ENCODE measurements at regions of chr9 and their contacts with region 1.

Region 1: GRCh38 chr9:5437254-5438216 is at the start of gene PLGRKT:
- DNase-seq: peak; percentile 76 to 96 (median 90)
- ATAC-seq: peak; percentile 96
- H3K4me3 ChIP-seq: peak within 1 kb of the TSS; percentile 71 to 76
- H3K4me3 Mint-ChIP-seq: peak within 1 kb of the TSS; percentile 89
- H3K27ac ChIP-seq: peak within 1 kb of the TSS; percentile 89 to 90
- H3K27ac Mint-ChIP-seq: peak within 1 kb of the TSS; percentile 96
- H3K4me1 ChIP-seq: peaks cover 23% of the 10 kb centered on the region
- H3K4me1 Mint-ChIP-seq: peaks cover 36% of the 10 kb centered on the region
- H3K27me3 ChIP-seq: no peaks in the 10 kb centered on the region
- H3K27me3 Mint-ChIP-seq: no peaks in the 10 kb centered on the region
- CTCF ChIP-seq: peak; percentile 10
- total RNA-seq, gene PLGRKT: 10.1 to 12.8 TPM

Region 2: GRCh38 chr9:3525836-3526164 is 1911.7 kb before region 1 on chr9 and contains the start of gene RFX3:
- CTCF ChIA-PET with region 1: no interaction called
- POLR2A ChIA-PET with region 1: no interaction called
- intact Hi-C with region 1: loop called (anchors 2 to 10 kb)
- DNase-seq: peak; percentile 86 to 98 (median 93)
- ATAC-seq: peak; percentile 66
- H3K4me3 ChIP-seq: peak within 1 kb of the TSS; percentile 74 to 98
- H3K4me3 Mint-ChIP-seq: peak within 1 kb of the TSS; percentile 98
- H3K27ac ChIP-seq: peak within 1 kb of the TSS; percentile 99 to 100
- H3K27ac Mint-ChIP-seq: peak within 1 kb of the TSS; percentile 100
- H3K4me1 ChIP-seq: peaks cover 48% of the 10 kb centered on the region
- H3K4me1 Mint-ChIP-seq: peaks cover 65% of the 10 kb centered on the region
- H3K27me3 ChIP-seq: no peaks in the 10 kb centered on the region
- H3K27me3 Mint-ChIP-seq: no peaks in the 10 kb centered on the region
- CTCF ChIP-seq: no peak
- total RNA-seq, gene RFX3: 17.6 to 18.9 TPM

Region 3: GRCh38 chr9:4792572-4793458 is 644.7 kb before region 1 on chr9 and contains the start of gene RCL1:
- CTCF ChIA-PET with region 1: no interaction called
- POLR2A ChIA-PET with region 1: interaction called, 4 read pairs
- intact Hi-C with region 1: loop called (anchors 1 to 5 kb)
- DNase-seq: peak; percentile 92 to 98 (median 95)
- ATAC-seq: peak; percentile 90
- H3K4me3 ChIP-seq: peak within 1 kb of the TSS; percentile 92 to 98
- H3K4me3 Mint-ChIP-seq: peak within 1 kb of the TSS; percentile 95
- H3K27ac ChIP-seq: peak within 1 kb of the TSS; percentile 90 to 92
- H3K27ac Mint-ChIP-seq: peak within 1 kb of the TSS; percentile 96
- H3K4me1 ChIP-seq: peaks cover 30% of the 10 kb centered on the region
- H3K4me1 Mint-ChIP-seq: peaks cover 47% of the 10 kb centered on the region
- H3K27me3 ChIP-seq: no peaks in the 10 kb centered on the region
- H3K27me3 Mint-ChIP-seq: no peaks in the 10 kb centered on the region
- CTCF ChIP-seq: no peak
- total RNA-seq, gene RCL1: 30.8 to 35.0 TPM

Region 4: DNA sequence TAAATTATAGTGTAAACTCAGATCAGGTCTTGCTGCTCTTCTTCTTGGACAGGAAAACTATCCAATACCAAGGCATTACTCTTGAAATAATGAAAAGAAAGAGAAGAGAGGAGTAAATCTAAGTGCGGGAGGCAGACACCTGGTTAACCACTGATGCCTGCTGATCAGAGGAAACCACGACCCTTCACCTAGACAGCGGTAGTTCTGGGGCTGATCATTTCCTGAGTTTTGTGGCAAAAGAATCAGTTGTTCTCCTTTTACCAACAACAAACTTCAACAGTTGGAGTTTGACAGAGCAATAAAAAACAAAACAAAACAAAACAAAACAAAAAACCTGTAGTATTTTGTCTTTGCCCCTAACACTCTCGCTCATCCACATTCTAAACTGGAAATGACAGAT is 100.8 kb before region 1 on chr9:
- CTCF ChIA-PET with region 1: no interaction called
- POLR2A ChIA-PET with region 1: no interaction called
- intact Hi-C with region 1: loop called (anchors 5 kb)
- DNase-seq: peak in 5 of 9 experiments; percentile 23 to 69 (median 47)
- ATAC-seq: peak; percentile 19
- H3K4me3 ChIP-seq: peak overlapping the region; percentile 2 to 31
- H3K4me3 Mint-ChIP-seq: peak overlapping the region; percentile 71
- H3K27ac ChIP-seq: peak overlapping the region; percentile 28 to 30
- H3K27ac Mint-ChIP-seq: peak overlapping the region; percentile 89
- H3K4me1 ChIP-seq: peaks cover 27% of the 10 kb centered on the region
- H3K4me1 Mint-ChIP-seq: peaks cover 54% of the 10 kb centered on the region
- H3K27me3 ChIP-seq: no peaks in the 10 kb centered on the region
- H3K27me3 Mint-ChIP-seq: no peaks in the 10 kb centered on the region
- CTCF ChIP-seq: no peak

Region 5: GRCh38 chr9:5582835-5583195 is 145.3 kb after region 1 on chr9:
- CTCF ChIA-PET with region 1: interaction called, 28 read pairs
- POLR2A ChIA-PET with region 1: interaction called, 10 read pairs
- intact Hi-C with region 1: no loop called
- DNase-seq: peak in 6 of 9 experiments; percentile 4 to 62 (median 40)
- ATAC-seq: peak; percentile 85
- H3K4me3 ChIP-seq: no peak overlapping the region
- H3K4me3 Mint-ChIP-seq: no peak overlapping the region
- H3K27ac ChIP-seq: no peak overlapping the region
- H3K27ac Mint-ChIP-seq: peak overlapping the region; percentile 46
- H3K4me1 ChIP-seq: peaks cover 31% of the 10 kb centered on the region
- H3K4me1 Mint-ChIP-seq: peaks cover 45% of the 10 kb centered on the region
- H3K27me3 ChIP-seq: no peaks in the 10 kb centered on the region
- H3K27me3 Mint-ChIP-seq: no peaks in the 10 kb centered on the region
- CTCF ChIP-seq: no peak

Region 6: GRCh38 chr9:5843794-5844504 is 406.4 kb after region 1 on chr9:
- CTCF ChIA-PET with region 1: interaction called, 3 read pairs
- POLR2A ChIA-PET with region 1: no interaction called
- intact Hi-C with region 1: loop called in 1 of 2 experiments (anchors 5 kb)
- DNase-seq: peak in 1 of 9 experiments; percentile 35
- ATAC-seq: no peak
- H3K4me3 ChIP-seq: peak overlapping the region in 1 of 2 experiments; percentile 24
- H3K4me3 Mint-ChIP-seq: peak overlapping the region; percentile 65
- H3K27ac ChIP-seq: peak overlapping the region in 1 of 2 experiments; percentile 61
- H3K27ac Mint-ChIP-seq: peak overlapping the region; percentile 84
- H3K4me1 ChIP-seq: peaks cover 53% of the 10 kb centered on the region
- H3K4me1 Mint-ChIP-seq: peaks cover 63% of the 10 kb centered on the region
- H3K27me3 ChIP-seq: no peaks in the 10 kb centered on the region
- H3K27me3 Mint-ChIP-seq: no peaks in the 10 kb centered on the region
- CTCF ChIP-seq: no peak

Region 7: DNA sequence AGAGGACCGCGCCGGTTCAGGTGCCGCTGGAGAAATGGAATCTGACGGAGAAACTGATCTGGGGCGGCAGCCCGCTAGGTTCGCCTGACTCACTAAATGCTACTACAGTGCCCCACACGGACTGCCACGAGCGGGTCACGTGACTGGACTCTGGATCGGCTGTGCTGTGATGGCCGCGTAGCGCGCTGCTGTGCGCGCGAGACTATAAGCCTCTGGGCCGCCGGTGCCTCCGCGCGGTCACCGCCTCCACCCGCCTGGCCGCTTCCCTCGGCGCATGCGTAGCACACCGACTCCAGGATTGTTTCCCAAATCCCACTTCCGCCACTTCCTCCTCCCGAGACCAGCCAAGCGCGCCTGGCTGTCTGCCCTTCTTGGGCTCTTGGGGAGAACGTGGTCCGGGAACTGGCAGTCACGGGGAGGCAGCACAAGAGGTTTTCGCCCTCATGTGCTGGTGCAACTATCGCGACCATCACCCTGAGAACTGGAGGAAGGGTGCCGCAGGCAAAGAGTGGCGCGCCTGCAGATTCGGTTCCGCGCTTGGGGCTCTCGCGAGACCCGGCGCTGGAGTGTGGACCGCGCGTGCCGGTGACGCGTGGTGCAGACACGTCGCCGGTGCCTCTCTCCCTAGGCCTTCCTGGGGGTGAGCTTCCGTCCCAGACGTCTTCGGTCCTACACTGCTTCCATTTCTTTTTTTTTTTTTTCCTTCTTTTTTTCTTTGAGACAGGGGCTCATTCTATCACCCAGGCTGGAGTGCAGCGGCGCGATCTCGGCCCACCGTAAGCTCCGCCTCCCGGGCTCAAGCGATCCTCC is 1243.8 kb after region 1 on chr9:
- CTCF ChIA-PET with region 1: no interaction called
- POLR2A ChIA-PET with region 1: no interaction called
- intact Hi-C with region 1: loop called in 1 of 2 experiments (anchors 5 kb)
- DNase-seq: peak; percentile 77 to 96 (median 89)
- ATAC-seq: peak; percentile 85
- H3K4me3 ChIP-seq: peak overlapping the region; percentile 84 to 97
- H3K4me3 Mint-ChIP-seq: peak overlapping the region; percentile 93
- H3K27ac ChIP-seq: peak overlapping the region; percentile 94 to 96
- H3K27ac Mint-ChIP-seq: peak overlapping the region; percentile 98
- H3K4me1 ChIP-seq: peaks cover 11% of the 10 kb centered on the region
- H3K4me1 Mint-ChIP-seq: peaks cover 22% of the 10 kb centered on the region
- H3K27me3 ChIP-seq: no peaks in the 10 kb centered on the region
- H3K27me3 Mint-ChIP-seq: no peaks in the 10 kb centered on the region
- CTCF ChIP-seq: no peak

Measured in CD8-positive, alpha-beta T cell (primary cell).